ENCODE measurements at regions of chr21 and their contacts with region 1.

Region 1: GRCh38 chr21:15986277-15986676 is 256.5 kb downstream of the USP25 start:
- DNase-seq: no peak
- H3K4me3 ChIP-seq: no peak overlapping the region
- H3K27ac ChIP-seq: no peak overlapping the region
- H3K4me1 ChIP-seq: no peaks in the 10 kb centered on the region
- H3K27me3 ChIP-seq: no peaks in the 10 kb centered on the region
- CTCF ChIP-seq: no peak
- POLR2A ChIP-seq: no peak

Region 2: DNA sequence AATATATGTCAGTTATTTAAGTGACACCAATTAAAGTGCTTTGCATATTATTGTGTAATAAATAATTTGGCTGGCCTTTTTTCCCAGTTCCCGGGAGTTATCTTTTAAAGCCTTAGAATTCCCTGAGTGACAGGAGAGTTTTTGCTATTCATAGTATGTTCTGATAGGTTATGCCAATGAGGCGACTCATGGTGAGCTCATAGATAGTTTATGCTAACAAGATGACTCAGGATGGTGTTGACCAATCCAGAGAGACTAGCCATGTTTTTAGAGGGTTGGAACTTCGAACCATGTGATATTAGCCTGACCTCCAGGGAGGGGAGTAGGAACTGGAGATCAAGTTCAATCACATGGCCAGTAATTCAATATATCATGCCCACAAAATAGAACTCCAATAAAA is 54.3 kb after region 1 on chr21:
- intact Hi-C with region 1: loop called (anchors 2 kb)
- DNase-seq: no peak
- H3K4me3 ChIP-seq: no peak overlapping the region
- H3K27ac ChIP-seq: no peak overlapping the region
- H3K4me1 ChIP-seq: no peaks in the 10 kb centered on the region
- H3K27me3 ChIP-seq: no peaks in the 10 kb centered on the region
- CTCF ChIP-seq: no peak
- POLR2A ChIP-seq: no peak

Measured in spleen (tissue), 13 donors.